Right ventricle myocardium inferior (tissue), 1 donor: ENCODE measurements at regions of chr21 and their contacts with region 1.

Region 1: DNA sequence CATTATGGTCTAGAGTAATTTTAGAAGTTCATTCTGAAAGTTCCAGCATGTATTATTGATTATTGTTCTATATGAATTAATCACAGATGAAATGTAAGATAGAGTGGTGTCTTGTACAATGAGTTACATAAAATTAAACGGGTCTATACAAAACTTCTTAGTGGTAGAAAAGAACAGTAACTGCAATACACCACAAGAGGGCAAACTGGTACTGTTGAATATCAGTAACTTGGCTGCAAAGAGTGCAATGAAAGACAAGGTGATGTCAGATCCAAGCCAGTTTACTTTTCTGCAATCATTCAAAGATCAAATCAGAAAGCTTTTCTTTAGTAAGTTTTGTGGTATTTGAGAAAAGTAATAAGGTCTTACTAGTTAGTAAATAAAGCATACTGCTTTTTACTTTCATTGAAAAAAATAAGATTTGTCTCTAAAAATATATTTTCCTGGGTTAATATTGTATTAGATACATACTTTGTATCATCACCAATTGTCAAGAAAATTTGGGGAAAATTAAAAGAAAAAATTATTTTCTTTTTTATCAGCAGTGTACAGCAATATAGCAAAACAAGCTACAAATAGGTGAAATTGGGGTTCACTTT is 66.4 kb upstream of the BTG3 start:
- DNase-seq: no peak
- ATAC-seq: peak; percentile 65

Region 2: GRCh38 chr21:17903029-17903806 is 224.1 kb after region 1 on chr21:
- intact Hi-C with region 1: loop called (anchors 1 kb)
- DNase-seq: no peak
- ATAC-seq: no peak

Region 3: GRCh38 chr21:17925000-17925610 is 246.0 kb after region 1 on chr21:
- intact Hi-C with region 1: loop called (anchors 5 kb)
- DNase-seq: no peak
- ATAC-seq: peak; percentile 70